Activated CD8-positive, alpha-beta T cell treated with anti-CD3 and anti-CD28 coated beads, Interleukin-2, amount 10 ng/mL, durations not matched to agents 7 days and 5 days (primary cell): ENCODE measurements at regions of chr14 and their contacts with region 1.

Region 1: GRCh38 chr14:100645192-100645990 is 58.2 kb upstream of the BEGAIN start:
- DNase-seq: peak; percentile 92
- ATAC-seq: peak; percentile 89
- H3K4me3 Mint-ChIP-seq: peak overlapping the region; percentile 49
- H3K27ac Mint-ChIP-seq: peak overlapping the region; percentile 86
- H3K4me1 Mint-ChIP-seq: peaks cover 68% of the 10 kb centered on the region
- H3K27me3 Mint-ChIP-seq: peaks cover 13% of the 10 kb centered on the region

Region 2: GRCh38 chr14:100392356-100392755 is 253.0 kb before region 1 on chr14:
- CTCF ChIA-PET with region 1: interaction called, 162 read pairs
- POLR2A ChIA-PET with region 1: no interaction called
- DNase-seq: no peak
- ATAC-seq: no peak
- H3K4me3 Mint-ChIP-seq: no peak overlapping the region
- H3K27ac Mint-ChIP-seq: no peak overlapping the region
- H3K4me1 Mint-ChIP-seq: no peaks in the 10 kb centered on the region
- H3K27me3 Mint-ChIP-seq: no peaks in the 10 kb centered on the region

Region 3: GRCh38 chr14:100446572-100446971 is 198.8 kb before region 1 on chr14:
- CTCF ChIA-PET with region 1: interaction called, 77 read pairs
- POLR2A ChIA-PET with region 1: no interaction called
- DNase-seq: no peak
- ATAC-seq: no peak
- H3K4me3 Mint-ChIP-seq: no peak overlapping the region
- H3K27ac Mint-ChIP-seq: no peak overlapping the region
- H3K4me1 Mint-ChIP-seq: peaks cover 15% of the 10 kb centered on the region
- H3K27me3 Mint-ChIP-seq: no peaks in the 10 kb centered on the region

Region 4: DNA sequence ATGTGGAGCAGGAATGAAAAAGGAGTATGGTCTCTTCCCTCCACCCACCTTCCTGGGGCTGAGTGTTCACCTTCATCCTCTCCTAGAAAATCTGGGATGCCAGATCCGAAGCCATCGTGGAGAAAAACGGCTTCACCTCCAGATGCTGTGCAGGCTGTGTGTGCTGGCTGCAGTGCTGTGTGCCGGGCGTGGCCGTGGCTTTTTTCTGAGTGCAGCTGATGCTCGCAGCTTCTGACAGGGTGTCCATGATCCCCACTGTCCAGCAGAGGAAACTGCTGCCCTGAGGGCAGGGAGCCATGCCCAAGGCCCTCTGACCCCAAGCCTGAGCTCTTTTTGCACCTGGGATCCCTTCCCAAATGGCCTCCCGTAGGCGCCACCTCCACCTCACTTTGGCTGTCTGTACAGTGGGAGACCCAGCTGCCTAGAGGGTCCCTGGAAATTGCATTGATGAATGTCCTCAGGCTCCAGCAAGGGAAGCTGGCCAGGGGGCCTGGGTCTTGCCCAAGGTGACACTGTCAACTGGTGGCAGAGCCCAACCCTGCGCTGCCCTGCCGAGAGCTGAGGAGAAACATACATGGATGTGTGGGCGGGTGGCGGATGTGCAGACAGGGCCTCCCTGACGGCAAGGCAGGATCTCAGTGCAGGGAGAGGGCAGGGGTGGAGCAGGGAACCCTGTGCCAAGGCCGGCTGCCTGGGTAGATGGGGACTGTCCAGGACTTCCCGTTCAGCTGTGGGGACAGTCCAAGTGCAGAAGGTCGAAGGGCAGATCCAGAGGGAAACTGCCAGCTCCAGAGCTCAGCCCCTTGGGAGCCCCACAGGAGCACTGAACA is 111.5 kb before region 1 on chr14:
- CTCF ChIA-PET with region 1: interaction called, 16 read pairs
- POLR2A ChIA-PET with region 1: no interaction called
- DNase-seq: peak; percentile 18
- ATAC-seq: no peak
- H3K4me3 Mint-ChIP-seq: no peak overlapping the region
- H3K27ac Mint-ChIP-seq: no peak overlapping the region
- H3K4me1 Mint-ChIP-seq: peaks cover 21% of the 10 kb centered on the region
- H3K27me3 Mint-ChIP-seq: no peaks in the 10 kb centered on the region

Region 5: DNA sequence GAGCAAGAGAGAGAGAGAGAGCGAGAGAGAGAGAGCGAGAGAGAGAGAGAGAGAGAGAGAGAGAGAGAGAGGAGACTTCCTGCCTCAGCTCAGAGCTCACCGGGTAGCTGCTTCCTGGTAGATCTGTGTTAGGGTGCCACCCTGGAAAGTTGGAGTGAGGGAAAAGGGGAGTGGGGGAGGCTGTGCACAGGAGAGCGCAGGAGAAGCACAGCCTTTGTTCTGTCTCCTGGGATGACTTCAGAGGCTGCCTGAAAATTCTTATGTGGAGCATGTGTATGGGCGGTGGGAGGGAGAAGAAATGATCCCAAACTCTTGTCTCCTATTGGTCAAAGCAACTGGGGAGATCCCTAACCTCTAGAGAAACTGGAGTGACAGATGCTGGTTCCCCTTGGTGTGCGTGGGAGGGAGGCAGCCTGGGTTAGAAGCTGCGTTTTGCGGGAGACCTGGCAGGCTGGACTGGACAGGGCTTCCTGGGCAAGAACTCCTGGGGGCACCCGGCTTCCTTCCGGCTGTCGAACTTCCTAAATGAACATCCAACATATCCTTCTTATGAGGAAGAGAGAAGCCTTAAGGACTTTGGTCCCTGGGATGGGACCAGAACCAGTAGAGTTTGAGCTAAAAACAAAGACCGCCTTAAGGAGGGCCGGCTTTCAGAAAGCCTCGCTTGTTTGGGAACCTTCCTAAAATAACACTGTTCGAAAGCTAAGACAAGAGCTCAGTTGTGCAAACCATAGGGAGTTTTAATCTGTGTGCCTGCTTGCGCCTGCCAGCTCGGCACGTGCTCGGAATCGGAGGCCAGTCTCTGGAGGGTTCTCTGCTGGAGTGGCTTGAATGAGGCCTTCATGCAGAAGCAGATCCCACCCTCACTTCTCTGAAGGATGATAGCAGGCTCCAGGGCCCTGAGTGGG is 27.7 kb before region 1 on chr14:
- CTCF ChIA-PET with region 1: interaction called, 39 read pairs
- POLR2A ChIA-PET with region 1: no interaction called
- DNase-seq: peak; percentile 39
- ATAC-seq: peak; percentile 27
- H3K4me3 Mint-ChIP-seq: no peak overlapping the region
- H3K27ac Mint-ChIP-seq: peak overlapping the region; percentile 62
- H3K4me1 Mint-ChIP-seq: peaks cover 18% of the 10 kb centered on the region
- H3K27me3 Mint-ChIP-seq: peaks cover 10% of the 10 kb centered on the region